PC-9 (cell line): ENCODE measurements at regions of chr4 and their contacts with region 1.

Region 1: GRCh38 chr4:27318743-27319142 is 458.1 kb downstream of the STIM2 start:
- DNase-seq: peak in 1 of 2 experiments; percentile 24
- H3K4me3 ChIP-seq: no peak overlapping the region
- H3K27ac ChIP-seq: no peak overlapping the region
- H3K4me1 ChIP-seq: no peaks in the 10 kb centered on the region
- H3K27me3 ChIP-seq: no peaks in the 10 kb centered on the region
- CTCF ChIP-seq: 0 out of 2 replicates have a peak, but pooled peaks have one; percentile 24

Region 2: DNA sequence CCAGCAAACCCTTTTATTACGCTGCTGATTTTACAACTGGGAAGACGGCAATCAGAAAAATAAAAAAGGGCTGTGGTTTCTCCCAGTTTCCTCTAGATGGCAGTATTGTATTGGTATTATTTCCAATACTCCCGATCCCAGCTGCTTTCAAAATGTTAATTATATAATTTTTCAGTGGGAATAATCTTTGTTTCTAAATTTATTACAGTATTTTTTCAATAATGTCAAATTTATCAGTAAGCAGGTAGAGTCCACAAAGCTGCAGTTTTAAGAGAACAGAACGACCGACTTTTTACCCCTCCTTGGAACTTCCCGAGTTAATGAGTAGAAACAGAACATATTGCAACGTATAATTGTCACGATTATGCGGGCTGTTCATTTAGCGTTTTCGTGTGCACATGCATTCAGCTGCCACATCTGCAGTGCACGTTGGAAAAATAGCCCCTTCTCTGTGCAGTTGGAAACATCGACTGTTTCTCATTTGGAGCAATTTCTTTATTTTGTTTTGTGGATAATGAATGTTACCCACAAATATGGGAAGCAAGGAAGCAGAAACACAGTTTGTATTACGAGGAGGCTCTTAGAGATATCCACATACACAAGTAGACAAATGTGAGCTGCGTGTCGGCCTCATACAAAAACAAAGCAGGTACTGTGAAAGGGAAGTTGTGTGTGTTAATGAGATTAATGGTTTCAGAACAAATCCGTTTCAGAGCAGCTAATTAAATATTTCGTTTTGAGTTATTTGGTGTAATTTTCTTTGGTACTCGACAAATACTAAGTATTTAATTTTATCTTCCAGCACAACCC is 270.1 kb before region 1 on chr4:
- CTCF ChIA-PET with region 1: interaction called, 8 read pairs
- POLR2A ChIA-PET with region 1: no interaction called
- intact Hi-C with region 1: loop called (anchors 1 kb)
- DNase-seq: peak in 1 of 2 experiments; percentile 4
- H3K4me3 ChIP-seq: peak overlapping the region; percentile 19; the same call in 1 of the 2 replicates
- H3K27ac ChIP-seq: no peak overlapping the region
- H3K4me1 ChIP-seq: no peaks in the 10 kb centered on the region
- H3K27me3 ChIP-seq: no peaks in the 10 kb centered on the region
- CTCF ChIP-seq: peak; percentile 70